ENCODE measurements at regions of chr14 and their contacts with region 1.

Region 1: DNA sequence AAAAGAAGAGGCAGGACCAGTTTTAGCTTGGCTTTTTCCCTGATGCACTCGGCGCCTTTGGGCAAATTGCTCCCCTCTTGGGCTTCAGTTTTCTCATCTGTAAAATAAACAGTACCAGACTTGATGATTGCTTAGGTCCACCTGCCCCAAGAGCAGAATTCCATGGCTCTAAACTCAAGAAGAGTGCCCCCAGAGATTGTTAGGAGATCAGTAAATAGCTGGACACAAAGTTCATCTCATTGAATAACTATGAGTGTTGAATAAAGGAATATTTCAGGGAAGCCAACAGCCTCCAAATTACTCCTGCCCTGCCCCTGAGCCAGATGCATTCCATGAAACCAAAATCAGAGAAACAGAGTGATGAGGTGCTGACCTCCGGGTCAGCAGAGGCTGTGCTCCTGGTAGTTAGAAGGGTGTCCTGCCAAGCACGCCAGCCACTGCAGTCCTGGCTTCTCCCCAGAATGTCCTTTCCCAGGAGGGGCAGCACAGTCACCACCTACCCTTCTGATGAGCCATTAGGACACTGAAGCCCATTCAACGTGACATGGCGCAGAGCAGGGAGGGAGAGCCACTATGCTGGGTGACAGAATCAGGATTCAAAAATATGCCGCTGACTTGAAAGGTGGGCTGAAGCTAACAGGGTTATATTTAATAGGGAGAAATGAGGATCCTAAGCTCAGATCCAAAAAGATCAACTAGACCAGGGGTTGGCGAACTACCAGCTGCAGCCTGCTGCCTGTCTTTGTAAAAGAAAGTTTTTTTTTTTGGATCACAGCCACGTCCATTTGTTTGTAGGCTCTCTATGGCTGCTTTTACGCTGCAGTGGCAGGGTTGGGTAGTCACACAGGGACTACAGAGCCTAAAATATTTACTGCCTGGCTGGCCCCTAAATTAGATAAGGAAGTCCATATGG is 34.4 kb upstream of the PLEK2 start:
- DNase-seq: no peak
- ATAC-seq: no peak
- H3K4me3 ChIP-seq: no peak overlapping the region
- H3K27ac ChIP-seq: no peak overlapping the region
- H3K4me1 ChIP-seq: no peaks in the 10 kb centered on the region
- H3K27me3 ChIP-seq: peaks cover 31% of the 10 kb centered on the region
- CTCF ChIP-seq: no peak
- POLR2A ChIP-seq: no peak
- RAD21 ChIP-seq: no peak

Region 2: DNA sequence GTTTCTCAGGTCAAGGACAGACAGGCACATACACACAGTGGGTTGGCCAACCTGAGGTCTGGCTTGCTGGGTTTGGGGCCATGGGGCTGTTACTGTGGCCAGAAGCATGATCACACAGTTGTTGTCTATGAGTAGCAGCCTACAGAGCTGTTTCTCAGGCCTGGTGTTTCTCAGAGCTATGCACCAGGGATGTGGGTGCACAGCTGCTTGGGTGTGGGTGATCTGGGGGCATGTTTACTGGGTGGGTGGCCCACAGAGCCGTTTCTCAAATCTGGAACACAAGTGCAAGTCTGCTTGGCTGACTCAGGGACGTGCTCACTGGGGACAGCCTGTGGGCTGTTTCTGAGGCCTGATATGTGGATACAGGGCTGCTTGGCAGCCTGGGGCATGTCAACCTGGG is 228.2 kb before region 1 on chr14:
- CTCF ChIA-PET with region 1: no interaction called
- POLR2A ChIA-PET with region 1: no interaction called
- dilution Hi-C with region 1: no loop called
- in situ Hi-C with region 1: no loop called
- intact Hi-C with region 1: no loop called
- DNase-seq: no peak
- ATAC-seq: no peak
- H3K4me3 ChIP-seq: no peak overlapping the region
- H3K27ac ChIP-seq: no peak overlapping the region
- H3K4me1 ChIP-seq: peaks cover 5% of the 10 kb centered on the region; the same call in 1 of the 2 replicates
- H3K27me3 ChIP-seq: no peaks in the 10 kb centered on the region
- CTCF ChIP-seq: no peak
- POLR2A ChIP-seq: no peak
- RAD21 ChIP-seq: no peak

Region 3: GRCh38 chr14:67228325-67228984 is 217.9 kb before region 1 on chr14:
- CTCF ChIA-PET with region 1: no interaction called
- POLR2A ChIA-PET with region 1: no interaction called
- dilution Hi-C with region 1: no loop called
- in situ Hi-C with region 1: no loop called
- intact Hi-C with region 1: no loop called
- DNase-seq: peak; percentile 45
- ATAC-seq: no peak
- H3K4me3 ChIP-seq: peak overlapping the region; percentile 2; the same call in 1 of the 2 replicates
- H3K27ac ChIP-seq: no peak overlapping the region
- H3K4me1 ChIP-seq: no peaks in the 10 kb centered on the region
- H3K27me3 ChIP-seq: no peaks in the 10 kb centered on the region
- CTCF ChIP-seq: no peak
- POLR2A ChIP-seq: no peak
- RAD21 ChIP-seq: no peak

Region 4: DNA sequence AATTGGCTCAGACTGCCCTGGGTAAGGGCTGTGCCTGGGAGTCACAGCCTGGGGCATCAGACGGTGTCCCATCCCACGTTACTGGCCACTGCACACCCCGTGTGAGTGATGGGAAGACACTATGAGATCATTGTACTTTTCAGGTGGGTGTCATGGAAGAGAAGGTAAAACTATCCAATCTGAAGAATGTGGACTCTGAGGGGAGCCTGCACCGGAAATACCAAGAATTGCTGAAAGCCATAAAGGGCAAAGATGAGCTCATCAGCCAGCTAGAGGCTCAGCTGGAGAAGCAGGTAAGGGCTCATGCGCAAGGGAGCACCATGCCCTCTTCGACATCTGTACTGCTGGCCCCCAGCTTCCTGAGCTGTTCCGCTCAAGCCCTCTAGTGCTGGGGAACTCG is 110.8 kb after region 1 on chr14:
- CTCF ChIA-PET with region 1: no interaction called
- POLR2A ChIA-PET with region 1: no interaction called
- dilution Hi-C with region 1: no loop called
- in situ Hi-C with region 1: loop called (anchors 10 kb)
- intact Hi-C with region 1: no loop called
- DNase-seq: peak; percentile 22
- ATAC-seq: peak; percentile 66
- H3K4me3 ChIP-seq: no peak overlapping the region
- H3K27ac ChIP-seq: no peak overlapping the region
- H3K4me1 ChIP-seq: no peaks in the 10 kb centered on the region
- H3K27me3 ChIP-seq: peaks cover 7% of the 10 kb centered on the region; the same call in 1 of the 2 replicates
- CTCF ChIP-seq: no peak
- POLR2A ChIP-seq: no peak
- RAD21 ChIP-seq: no peak